Activated CD4-positive, alpha-beta memory T cell treated with anti-CD3 and anti-CD28 coated beads for 36 hours (primary cell): ENCODE measurements at regions of chr2 and their contacts with region 1.

Region 1: DNA sequence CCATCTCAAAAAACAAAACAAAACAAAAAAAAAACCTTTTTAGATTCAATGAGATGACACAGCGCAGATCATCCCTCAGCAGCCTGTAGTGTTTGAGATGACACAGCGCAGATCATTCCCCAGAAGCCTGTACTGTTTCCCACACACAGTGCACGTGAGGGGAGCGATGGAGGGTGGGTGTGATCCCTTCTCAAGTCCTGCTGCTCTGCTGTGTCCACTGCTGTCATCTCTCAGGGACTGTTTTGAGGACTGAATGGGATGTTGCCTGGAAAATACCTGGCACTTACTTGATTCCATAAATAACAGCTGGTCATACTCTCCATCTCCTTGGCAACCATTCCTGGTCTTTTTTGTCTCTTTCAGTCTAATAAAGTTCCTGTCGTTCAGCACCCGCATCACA is 25.7 kb downstream of the TGOLN2 start:
- DNase-seq: no peak
- H3K4me3 Mint-ChIP-seq: no peak overlapping the region
- H3K27ac Mint-ChIP-seq: no peak overlapping the region
- H3K4me1 Mint-ChIP-seq: peaks cover 6% of the 10 kb centered on the region
- H3K27me3 Mint-ChIP-seq: peaks cover 4% of the 10 kb centered on the region

Region 2: DNA sequence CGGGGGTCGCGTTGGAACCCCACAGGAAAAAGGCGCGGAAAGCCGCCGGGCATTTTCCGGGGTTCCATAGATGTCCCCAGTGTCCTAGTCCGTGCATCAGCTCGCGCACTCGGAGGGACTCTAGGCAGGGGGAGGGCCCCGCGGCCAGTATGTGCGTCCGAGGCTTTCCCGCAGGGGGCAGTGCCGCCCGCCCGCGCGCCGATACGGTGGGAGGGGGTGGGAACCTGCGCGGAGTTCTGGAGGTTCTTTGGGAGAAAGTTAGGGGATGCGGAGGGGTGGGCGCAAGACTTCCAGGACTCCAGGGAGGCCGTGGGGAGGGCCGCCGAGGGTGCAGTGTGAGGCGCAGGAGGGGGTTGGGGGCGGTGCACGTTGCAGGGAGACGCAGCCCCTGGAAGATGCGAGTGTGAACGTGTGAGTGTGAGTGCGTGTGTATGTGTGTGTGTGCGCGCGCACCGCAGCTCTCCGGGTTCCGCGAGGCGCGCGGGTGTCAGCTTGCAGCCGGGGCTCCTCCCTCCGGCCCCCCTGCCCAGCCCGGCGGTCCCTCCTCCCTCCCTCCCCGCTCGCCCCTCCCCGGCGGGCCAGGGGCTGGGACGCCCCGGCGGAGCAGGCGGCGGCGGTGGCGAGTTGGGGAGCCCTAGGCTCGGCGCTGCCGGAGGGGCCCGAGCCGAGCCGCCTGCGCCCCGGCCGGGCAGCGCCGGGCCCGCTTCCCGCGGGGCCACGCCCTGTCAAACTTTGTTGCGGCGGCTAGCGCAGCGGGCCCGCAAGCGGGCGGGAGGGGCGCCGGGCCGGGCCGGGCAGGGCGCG is 169.1 kb before region 1 on chr2 and contains the start of gene TCF7L1:
- CTCF ChIA-PET with region 1: interaction called, 6 read pairs
- POLR2A ChIA-PET with region 1: no interaction called
- intact Hi-C with region 1: loop called (anchors 5 kb)
- DNase-seq: peak; percentile 59
- H3K4me3 Mint-ChIP-seq: peak within 1 kb of the TSS; percentile 62
- H3K27ac Mint-ChIP-seq: no peak within 1 kb of the TSS
- H3K4me1 Mint-ChIP-seq: peaks cover 4% of the 10 kb centered on the region
- H3K27me3 Mint-ChIP-seq: peaks cover 50% of the 10 kb centered on the region
- total RNA-seq, gene TCF7L1: 0.07 TPM in 1 of 2 experiments, not detected in the other

Region 3: DNA sequence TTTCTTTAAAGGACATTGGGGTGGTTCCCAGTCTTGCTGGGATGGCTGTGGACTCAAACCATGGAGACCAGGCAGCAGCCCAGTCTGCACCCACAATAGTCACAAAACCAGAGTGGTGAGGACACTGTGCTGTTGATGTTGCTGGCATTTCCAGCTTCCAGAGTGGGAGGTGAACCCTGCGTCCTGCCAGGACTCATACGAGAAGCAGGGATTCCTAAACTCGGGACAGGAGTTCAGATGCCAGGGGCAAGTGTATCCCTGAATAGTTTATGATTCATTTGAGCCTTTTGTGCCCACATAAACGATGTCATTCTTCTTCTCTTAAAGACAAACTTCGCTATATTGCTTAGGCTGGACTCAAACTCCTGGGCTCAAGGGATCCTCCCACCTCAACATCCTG is 106.2 kb before region 1 on chr2:
- CTCF ChIA-PET with region 1: no interaction called
- POLR2A ChIA-PET with region 1: no interaction called
- intact Hi-C with region 1: no loop called
- DNase-seq: no peak
- H3K4me3 Mint-ChIP-seq: no peak overlapping the region
- H3K27ac Mint-ChIP-seq: no peak overlapping the region
- H3K4me1 Mint-ChIP-seq: no peaks in the 10 kb centered on the region
- H3K27me3 Mint-ChIP-seq: no peaks in the 10 kb centered on the region

Region 4: DNA sequence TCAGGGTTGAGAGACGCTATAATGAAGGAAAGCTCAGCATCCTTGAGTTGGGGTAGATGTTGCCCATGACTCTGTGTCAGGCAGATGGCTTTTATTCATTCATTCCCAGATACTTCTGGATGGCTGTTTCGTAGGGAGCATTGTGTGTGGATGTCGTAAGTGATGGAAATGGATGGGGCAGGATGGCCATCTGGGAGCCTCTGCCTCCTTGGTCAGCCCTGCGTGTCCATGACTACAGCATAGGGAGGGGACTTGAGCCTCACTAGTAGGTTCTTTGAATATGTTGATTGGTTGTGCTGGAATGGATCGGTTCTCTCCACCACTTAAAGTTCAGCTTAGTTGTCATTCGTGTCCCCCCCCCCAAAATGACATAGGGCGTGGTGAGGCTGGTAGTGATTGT is 19.2 kb before region 1 on chr2:
- CTCF ChIA-PET with region 1: interaction called, 45 read pairs
- POLR2A ChIA-PET with region 1: no interaction called
- intact Hi-C with region 1: loop called (anchors 2 kb)
- DNase-seq: no peak
- H3K4me3 Mint-ChIP-seq: no peak overlapping the region
- H3K27ac Mint-ChIP-seq: no peak overlapping the region
- H3K4me1 Mint-ChIP-seq: peaks cover 6% of the 10 kb centered on the region
- H3K27me3 Mint-ChIP-seq: no peaks in the 10 kb centered on the region

Region 5: DNA sequence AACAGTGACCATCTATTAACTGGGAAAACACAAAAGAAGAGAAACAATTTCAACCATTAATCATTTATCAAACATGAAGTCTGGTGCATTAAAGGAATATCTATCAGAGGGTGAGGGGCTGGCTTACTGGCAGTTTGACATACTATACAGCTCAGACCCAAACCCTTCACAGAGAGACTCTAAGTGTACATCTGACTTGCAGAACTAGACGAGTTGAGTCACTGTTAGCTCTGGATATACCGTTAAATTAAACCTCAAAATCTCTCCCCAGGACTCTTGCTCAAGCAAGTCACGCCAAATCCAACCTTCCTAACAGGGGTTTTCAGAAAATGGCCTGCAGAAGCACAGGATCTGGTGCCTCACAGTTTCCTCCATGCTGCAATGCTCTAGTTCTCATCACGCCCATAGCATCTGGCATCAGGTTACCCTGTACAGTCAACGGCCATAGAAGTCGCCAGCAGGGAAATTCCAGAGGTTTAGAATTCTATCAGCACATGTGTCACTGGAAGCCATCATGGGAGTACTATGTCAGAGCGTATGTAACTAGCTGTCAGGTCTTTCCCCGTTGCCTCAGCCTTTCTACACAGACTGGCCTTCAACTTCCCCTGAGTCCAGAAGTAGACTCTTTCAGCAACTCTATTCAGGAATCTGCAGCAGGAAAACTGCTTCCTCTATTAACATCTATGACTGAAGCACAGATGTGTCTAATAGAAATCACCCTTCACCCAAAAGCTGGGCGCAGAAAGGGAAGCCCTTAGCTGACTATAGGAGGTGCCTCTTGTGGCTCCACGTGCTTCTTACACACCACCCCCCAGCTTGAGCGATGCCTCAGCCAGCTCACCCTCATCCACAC is 16.3 kb after region 1 on chr2:
- CTCF ChIA-PET with region 1: interaction called, 28 read pairs
- POLR2A ChIA-PET with region 1: interaction called, 3 read pairs
- intact Hi-C with region 1: no loop called
- DNase-seq: peak; percentile 70
- H3K4me3 Mint-ChIP-seq: peak overlapping the region; percentile 30
- H3K27ac Mint-ChIP-seq: peak overlapping the region; percentile 82
- H3K4me1 Mint-ChIP-seq: peaks cover 57% of the 10 kb centered on the region
- H3K27me3 Mint-ChIP-seq: no peaks in the 10 kb centered on the region

Region 6: GRCh38 chr2:85551698-85552678 is 249.9 kb after region 1 on chr2:
- CTCF ChIA-PET with region 1: interaction called, 8 read pairs
- POLR2A ChIA-PET with region 1: no interaction called
- intact Hi-C with region 1: loop called (anchors 5 kb)
- DNase-seq: peak; percentile 91
- H3K4me3 Mint-ChIP-seq: no peak overlapping the region
- H3K27ac Mint-ChIP-seq: no peak overlapping the region
- H3K4me1 Mint-ChIP-seq: peaks cover 3% of the 10 kb centered on the region
- H3K27me3 Mint-ChIP-seq: no peaks in the 10 kb centered on the region